Activated naive CD4-positive, alpha-beta T cell treated with anti-CD3 and anti-CD28 coated beads for 36 hours (primary cell): ENCODE measurements at regions of chr10 and their contacts with region 1.

Region 1: GRCh38 chr10:100338434-100339036 is 8.5 kb upstream of the SCD start:
- DNase-seq: peak; percentile 91
- H3K4me3 Mint-ChIP-seq: no peak overlapping the region
- H3K27ac Mint-ChIP-seq: no peak overlapping the region
- H3K4me1 Mint-ChIP-seq: no peaks in the 10 kb centered on the region
- H3K27me3 Mint-ChIP-seq: no peaks in the 10 kb centered on the region

Region 2: GRCh38 chr10:100303724-100304319 is 34.7 kb before region 1 on chr10:
- CTCF ChIA-PET with region 1: no interaction called
- intact Hi-C with region 1: loop called (anchors 1 kb)
- DNase-seq: no peak
- H3K4me3 Mint-ChIP-seq: no peak overlapping the region
- H3K27ac Mint-ChIP-seq: no peak overlapping the region
- H3K4me1 Mint-ChIP-seq: no peaks in the 10 kb centered on the region
- H3K27me3 Mint-ChIP-seq: peaks cover 25% of the 10 kb centered on the region

Region 3: DNA sequence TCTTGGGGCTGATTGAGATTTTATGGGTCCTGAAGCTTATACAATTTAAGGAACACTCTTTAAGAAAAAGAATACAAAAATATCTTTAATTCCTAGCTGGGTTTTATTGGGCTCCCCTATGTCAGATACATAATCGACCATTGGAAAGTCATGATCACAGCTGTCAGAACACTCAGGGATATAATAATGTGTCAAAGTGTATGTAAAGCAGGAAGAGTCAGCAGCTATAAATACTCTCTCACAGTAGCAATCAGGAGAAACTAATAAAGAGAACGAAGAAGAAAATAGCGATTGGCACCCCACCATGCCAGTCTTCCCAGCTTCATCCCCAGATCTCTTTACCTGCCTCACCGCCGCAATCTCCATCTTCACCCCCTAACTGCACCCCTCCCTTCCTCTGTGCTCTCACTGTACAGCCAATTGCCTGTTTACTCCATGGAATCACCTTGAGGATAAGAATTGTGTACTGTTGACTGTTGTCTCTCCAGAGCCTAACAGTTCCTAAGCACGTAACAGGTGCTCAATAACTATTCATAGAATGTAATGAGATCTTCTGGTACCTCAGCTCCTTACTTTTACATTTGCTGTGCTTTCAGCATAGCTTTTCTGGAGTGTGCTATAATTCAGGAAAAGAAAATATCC is 100.3 kb after region 1 on chr10:
- CTCF ChIA-PET with region 1: interaction called, 276 read pairs
- intact Hi-C with region 1: loop called (anchors 1 kb)
- DNase-seq: no peak
- H3K4me3 Mint-ChIP-seq: no peak overlapping the region
- H3K27ac Mint-ChIP-seq: no peak overlapping the region
- H3K4me1 Mint-ChIP-seq: no peaks in the 10 kb centered on the region
- H3K27me3 Mint-ChIP-seq: no peaks in the 10 kb centered on the region